ENCODE measurements at regions of chr15 and their contacts with region 1.

Region 1: DNA sequence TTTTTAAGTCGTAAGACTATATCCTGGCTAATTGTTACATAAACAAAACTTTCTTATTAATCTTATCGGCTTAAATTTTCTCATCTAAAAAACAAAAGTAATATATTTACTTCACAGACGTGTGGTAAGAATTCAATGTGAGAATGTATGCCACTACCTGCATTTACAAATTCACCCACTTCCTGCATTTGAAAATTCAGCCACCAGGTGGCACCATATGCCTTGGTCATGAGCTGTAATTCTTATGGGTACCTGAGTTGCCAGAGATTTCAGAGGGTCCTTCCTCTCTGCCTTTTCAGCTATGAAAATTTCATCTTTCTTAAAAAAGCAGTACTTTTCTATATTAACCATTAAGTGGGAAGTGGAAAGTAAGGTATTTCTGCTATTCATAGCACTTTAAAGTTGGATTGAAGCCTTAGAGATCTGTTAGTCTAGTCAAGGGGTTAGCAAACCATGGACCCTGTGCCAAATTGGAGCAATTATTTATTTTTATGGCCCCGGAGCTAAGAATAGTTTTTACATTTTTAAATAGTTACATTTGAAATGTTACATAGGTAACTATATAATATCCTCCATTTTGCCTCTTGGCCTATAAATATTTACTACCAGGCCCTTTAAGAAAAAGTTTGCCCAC is 127.8 kb downstream of the HCN4 start:
- DNase-seq: peak; percentile 43
- H3K4me3 ChIP-seq: no peak overlapping the region
- H3K27ac ChIP-seq: no peak overlapping the region
- H3K27me3 ChIP-seq: no peaks in the 10 kb centered on the region
- CTCF ChIP-seq: peak; percentile 92

Region 2: DNA sequence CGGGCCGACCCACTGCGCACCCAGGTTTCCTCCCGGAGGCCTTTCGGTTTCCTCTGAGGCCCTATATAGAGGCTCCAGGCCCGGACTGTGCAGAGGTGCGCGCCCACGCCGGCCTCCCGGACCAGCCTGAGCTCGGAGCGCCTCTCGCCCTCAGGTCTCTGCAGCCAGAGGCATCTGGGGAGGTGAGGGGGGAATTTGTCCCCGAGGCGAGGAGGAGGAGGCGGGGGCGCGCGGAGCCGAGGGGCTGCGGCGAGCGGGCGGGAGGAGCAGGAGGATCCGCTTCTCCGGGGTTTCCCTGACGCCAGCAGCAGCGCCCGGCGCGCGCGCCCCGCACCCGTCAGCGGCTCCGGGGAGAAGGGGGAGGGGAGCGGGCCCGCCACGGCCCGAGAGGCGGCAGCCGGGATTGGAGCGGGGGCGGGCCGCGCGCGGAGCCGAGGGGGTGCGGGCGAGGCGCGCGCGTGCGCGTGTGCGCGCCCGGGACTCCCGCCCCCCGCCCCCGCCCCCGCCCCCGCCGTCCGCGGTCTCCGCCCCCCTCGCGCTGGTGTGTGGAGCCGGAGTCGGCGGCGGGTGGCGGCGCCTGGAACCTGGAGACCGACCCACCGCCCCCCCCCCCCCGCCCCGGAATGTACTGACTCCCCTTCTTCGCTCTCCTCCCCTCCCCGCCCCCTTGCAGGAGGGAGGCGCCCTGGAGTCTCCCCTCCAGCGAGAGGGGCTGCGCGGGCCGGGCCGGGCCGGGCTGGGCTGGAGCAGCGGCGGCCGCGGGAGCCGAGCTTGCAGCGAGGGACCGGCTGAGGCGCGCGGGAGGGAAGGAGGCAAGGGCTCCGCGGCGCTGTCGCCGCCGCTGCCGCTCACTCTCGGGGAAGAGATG is 188.9 kb before region 1 on chr15 and contains the start of gene NEO1:
- CTCF ChIA-PET with region 1: no interaction called
- POLR2A ChIA-PET with region 1: no interaction called
- DNase-seq: no peak
- H3K4me3 ChIP-seq: peak within 1 kb of the TSS; percentile 72
- H3K27ac ChIP-seq: peak within 1 kb of the TSS; percentile 11
- H3K27me3 ChIP-seq: peaks cover 41% of the 10 kb centered on the region
- CTCF ChIP-seq: no peak
- polyA plus RNA-seq, gene NEO1: 3.5 and 3.9 TPM in 2 replicates

Region 3: GRCh38 chr15:73196113-73196512 is 44.9 kb before region 1 on chr15:
- CTCF ChIA-PET with region 1: interaction called, 10 read pairs
- POLR2A ChIA-PET with region 1: no interaction called
- DNase-seq: no peak
- H3K4me3 ChIP-seq: no peak overlapping the region
- H3K27ac ChIP-seq: no peak overlapping the region
- H3K27me3 ChIP-seq: no peaks in the 10 kb centered on the region
- CTCF ChIP-seq: no peak

Region 4: DNA sequence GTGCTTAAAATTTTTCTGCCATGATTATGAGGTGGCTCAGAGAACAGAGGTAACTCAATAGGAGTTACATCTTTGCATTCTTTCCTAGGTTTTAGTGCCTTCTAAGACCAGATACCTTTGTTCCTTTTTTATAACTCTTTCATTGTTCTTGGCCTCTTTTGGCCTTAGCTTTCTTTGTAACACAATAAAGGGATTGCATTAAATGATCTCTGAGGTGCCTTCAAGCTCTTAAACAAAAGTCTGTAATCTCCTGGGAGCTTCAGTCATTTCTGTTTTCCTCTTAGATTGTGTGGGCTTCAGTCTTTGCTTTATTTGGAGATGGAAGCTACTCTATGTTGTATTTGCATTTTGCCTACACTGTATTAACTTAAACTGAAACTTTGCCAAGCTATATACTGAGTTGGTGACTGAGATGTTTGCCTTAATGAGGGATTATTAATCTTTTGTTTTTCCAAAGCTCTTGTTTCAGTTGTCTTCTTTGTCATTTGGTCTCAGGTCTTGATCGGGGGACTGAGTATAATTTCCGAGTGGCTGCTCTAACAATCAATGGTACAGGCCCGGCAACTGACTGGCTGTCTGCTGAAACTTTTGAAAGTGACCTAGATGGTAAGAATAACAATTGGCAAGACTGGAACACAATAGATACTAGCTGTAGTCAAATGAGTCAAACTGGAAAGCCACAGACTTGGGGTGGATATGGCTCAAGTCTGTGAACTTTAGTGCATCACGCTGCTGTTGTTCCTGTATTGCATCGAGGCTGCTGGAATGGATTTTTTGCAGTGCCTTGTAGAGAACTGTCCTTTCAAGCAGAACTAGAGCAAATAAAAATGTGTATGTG is 17.5 kb after region 1 on chr15:
- CTCF ChIA-PET with region 1: interaction called, 71 read pairs
- POLR2A ChIA-PET with region 1: no interaction called
- DNase-seq: no peak
- H3K4me3 ChIP-seq: no peak overlapping the region
- H3K27ac ChIP-seq: no peak overlapping the region
- H3K27me3 ChIP-seq: no peaks in the 10 kb centered on the region
- CTCF ChIP-seq: no peak

Region 5: GRCh38 chr15:73265536-73266153 is 24.7 kb after region 1 on chr15:
- CTCF ChIA-PET with region 1: interaction called, 161 read pairs
- POLR2A ChIA-PET with region 1: no interaction called
- DNase-seq: peak; percentile 6
- H3K4me3 ChIP-seq: no peak overlapping the region
- H3K27ac ChIP-seq: no peak overlapping the region
- H3K27me3 ChIP-seq: no peaks in the 10 kb centered on the region
- CTCF ChIP-seq: peak; percentile 76

Region 6: GRCh38 chr15:73273181-73274002 is 32.4 kb after region 1 on chr15:
- CTCF ChIA-PET with region 1: interaction called, 161 read pairs
- POLR2A ChIA-PET with region 1: no interaction called
- DNase-seq: peak; percentile 16
- H3K4me3 ChIP-seq: no peak overlapping the region
- H3K27ac ChIP-seq: no peak overlapping the region
- H3K27me3 ChIP-seq: no peaks in the 10 kb centered on the region
- CTCF ChIP-seq: peak; percentile 82